ENCODE measurements at regions of chr9 and their contacts with region 1.

Region 1: DNA sequence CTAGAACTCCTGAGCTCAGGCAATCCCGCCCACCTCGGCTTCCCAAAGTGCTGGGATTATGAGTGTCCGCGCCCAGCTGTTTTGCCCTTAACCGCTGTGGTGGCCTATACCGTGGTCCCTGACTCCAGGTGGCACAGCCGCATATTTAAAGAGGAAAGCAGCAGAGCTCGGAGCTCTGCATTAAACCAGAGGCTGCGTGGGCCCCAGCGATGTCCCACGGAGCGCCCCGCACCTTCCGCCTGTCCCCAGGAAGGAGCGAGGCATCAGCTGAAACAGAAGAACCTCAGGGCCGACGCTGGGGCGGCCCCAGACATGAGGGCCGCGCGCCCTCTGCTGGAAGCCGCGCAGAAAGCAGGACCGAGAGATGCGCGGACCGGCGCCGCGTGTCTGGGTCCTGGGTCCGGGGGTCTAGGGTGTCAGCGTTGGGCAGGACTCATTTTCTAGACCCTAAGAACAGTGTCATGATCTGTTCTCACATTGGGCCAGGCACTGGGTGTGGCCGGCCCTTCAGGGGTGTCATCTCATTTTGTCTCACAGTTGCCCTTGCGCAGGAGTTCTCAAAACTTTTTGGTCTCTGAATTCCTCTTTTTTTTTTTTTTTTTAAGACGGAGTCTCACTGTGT is 37.7 kb downstream of the LAMC3 start:
- DNase-seq: peak; percentile 56
- H3K4me3 ChIP-seq: no peak overlapping the region
- H3K27ac ChIP-seq: no peak overlapping the region
- H3K4me1 ChIP-seq: no peaks in the 10 kb centered on the region
- H3K27me3 ChIP-seq: no peaks in the 10 kb centered on the region
- CTCF ChIP-seq: peak; percentile 95 to 98
- POLR2A ChIP-seq: no peak

Region 2: GRCh38 chr9:130707225-130707976 is 339.3 kb before region 1 on chr9:
- CTCF ChIA-PET with region 1: interaction called, 76 read pairs
- POLR2A ChIA-PET with region 1: no interaction called
- dilution Hi-C with region 1: no loop called
- intact Hi-C with region 1: loop called (anchors 5 kb)
- DNase-seq: peak; percentile 65
- H3K4me3 ChIP-seq: no peak overlapping the region
- H3K27ac ChIP-seq: no peak overlapping the region
- H3K4me1 ChIP-seq: no peaks in the 10 kb centered on the region
- H3K27me3 ChIP-seq: no peaks in the 10 kb centered on the region
- CTCF ChIP-seq: peak; percentile 36 to 66
- POLR2A ChIP-seq: no peak

Region 3: GRCh38 chr9:130866474-130866965 is 180.2 kb before region 1 on chr9:
- CTCF ChIA-PET with region 1: interaction called, 133 read pairs
- POLR2A ChIA-PET with region 1: interaction called, 3 read pairs
- dilution Hi-C with region 1: no loop called
- intact Hi-C with region 1: loop called (anchors 1 kb)
- DNase-seq: peak; percentile 84
- H3K4me3 ChIP-seq: no peak overlapping the region
- H3K27ac ChIP-seq: no peak overlapping the region
- H3K4me1 ChIP-seq: peaks cover 6% of the 10 kb centered on the region
- H3K27me3 ChIP-seq: no peaks in the 10 kb centered on the region
- CTCF ChIP-seq: peak; percentile 86 to 97
- POLR2A ChIP-seq: no peak

Region 4: DNA sequence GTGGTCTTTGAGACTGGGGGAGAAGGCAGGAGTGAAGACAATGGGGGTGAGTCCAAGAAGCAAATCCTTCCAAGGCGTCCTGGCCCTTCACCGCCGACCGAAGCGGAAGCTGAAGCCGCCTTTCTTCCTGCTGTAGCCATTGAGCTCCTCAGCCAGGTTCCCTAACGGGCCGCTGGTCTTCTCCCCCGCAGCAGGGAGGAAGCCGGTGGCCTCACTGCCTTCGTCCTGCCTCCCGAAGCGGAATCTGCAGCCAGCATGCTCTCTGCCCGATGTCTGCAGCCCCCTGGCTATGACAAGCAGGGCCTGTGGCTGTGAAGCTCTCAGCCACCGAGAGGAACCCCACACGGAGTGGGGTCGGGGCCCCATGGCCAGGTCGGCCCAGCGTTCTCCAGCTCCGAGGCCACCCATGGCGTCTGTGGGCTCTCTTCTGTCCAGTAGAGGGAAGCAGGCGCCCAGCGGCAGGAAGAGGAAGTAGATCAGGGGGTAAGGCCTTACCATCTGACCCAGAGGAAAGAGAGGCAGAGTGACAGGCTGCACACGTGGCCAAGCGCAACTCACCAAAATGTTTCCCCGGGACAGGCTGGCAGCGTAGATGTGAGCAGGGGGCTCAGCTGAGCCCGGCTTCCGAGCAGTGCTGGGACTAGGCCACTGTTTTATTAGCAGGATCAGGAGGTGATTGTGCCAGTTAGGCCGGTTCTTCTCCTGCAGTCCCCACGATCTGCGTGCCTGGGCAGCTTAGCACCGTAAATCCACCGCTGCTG is 153.2 kb before region 1 on chr9:
- CTCF ChIA-PET with region 1: interaction called, 27 read pairs
- POLR2A ChIA-PET with region 1: interaction called, 8 read pairs
- dilution Hi-C with region 1: no loop called
- intact Hi-C with region 1: loop called (anchors 5 kb)
- DNase-seq: no peak
- H3K4me3 ChIP-seq: no peak overlapping the region
- H3K27ac ChIP-seq: no peak overlapping the region
- H3K4me1 ChIP-seq: no peaks in the 10 kb centered on the region
- H3K27me3 ChIP-seq: no peaks in the 10 kb centered on the region
- CTCF ChIP-seq: peak in 1 of 2 donors; percentile 16
- POLR2A ChIP-seq: no peak

Region 5: GRCh38 chr9:130990978-130991777 is 55.5 kb before region 1 on chr9:
- CTCF ChIA-PET with region 1: interaction called, 10 read pairs
- POLR2A ChIA-PET with region 1: no interaction called
- dilution Hi-C with region 1: no loop called
- intact Hi-C with region 1: no loop called
- DNase-seq: no peak
- H3K4me3 ChIP-seq: no peak overlapping the region
- H3K27ac ChIP-seq: no peak overlapping the region
- H3K4me1 ChIP-seq: no peaks in the 10 kb centered on the region
- H3K27me3 ChIP-seq: peaks cover 4 to 12% of the 10 kb centered on the region in 2 experiments
- CTCF ChIP-seq: no peak
- POLR2A ChIP-seq: no peak

Region 6: GRCh38 chr9:131008909-131009618 is 37.6 kb before region 1 on chr9 and contains the start of gene LAMC3:
- CTCF ChIA-PET with region 1: interaction called, 14 read pairs
- POLR2A ChIA-PET with region 1: no interaction called
- dilution Hi-C with region 1: no loop called
- intact Hi-C with region 1: loop called (anchors 2 kb)
- DNase-seq: no peak
- H3K4me3 ChIP-seq: no peak within 1 kb of the TSS
- H3K27ac ChIP-seq: no peak within 1 kb of the TSS
- H3K4me1 ChIP-seq: no peaks in the 10 kb centered on the region
- H3K27me3 ChIP-seq: peaks cover 19 to 22% of the 10 kb centered on the region in 2 experiments
- CTCF ChIP-seq: peak; percentile 21 to 48
- POLR2A ChIP-seq: no peak
- total RNA-seq, gene LAMC3: 0.12 and 0.38 TPM in 2 replicates

Region 7: GRCh38 chr9:131028221-131028884 is 18.3 kb before region 1 on chr9:
- CTCF ChIA-PET with region 1: interaction called, 26 read pairs
- POLR2A ChIA-PET with region 1: no interaction called
- dilution Hi-C with region 1: no loop called
- intact Hi-C with region 1: no loop called
- DNase-seq: no peak
- H3K4me3 ChIP-seq: no peak overlapping the region
- H3K27ac ChIP-seq: no peak overlapping the region
- H3K4me1 ChIP-seq: no peaks in the 10 kb centered on the region
- H3K27me3 ChIP-seq: peaks cover 3% of the 10 kb centered on the region in 2 experiments
- CTCF ChIP-seq: no peak
- POLR2A ChIP-seq: no peak

Measured in endothelial cell of umbilical vein (primary cell).